AG04449 (cell line): ENCODE measurements at regions of chr1 and their contacts with region 1.

Region 1: GRCh38 chr1:67766141-67766978 is 66.9 kb downstream of the GNG12 start:
- DNase-seq: peak; percentile 64
- H3K4me3 ChIP-seq: peak overlapping the region; percentile 38
- CTCF ChIP-seq: peak; percentile 42

Region 2: DNA sequence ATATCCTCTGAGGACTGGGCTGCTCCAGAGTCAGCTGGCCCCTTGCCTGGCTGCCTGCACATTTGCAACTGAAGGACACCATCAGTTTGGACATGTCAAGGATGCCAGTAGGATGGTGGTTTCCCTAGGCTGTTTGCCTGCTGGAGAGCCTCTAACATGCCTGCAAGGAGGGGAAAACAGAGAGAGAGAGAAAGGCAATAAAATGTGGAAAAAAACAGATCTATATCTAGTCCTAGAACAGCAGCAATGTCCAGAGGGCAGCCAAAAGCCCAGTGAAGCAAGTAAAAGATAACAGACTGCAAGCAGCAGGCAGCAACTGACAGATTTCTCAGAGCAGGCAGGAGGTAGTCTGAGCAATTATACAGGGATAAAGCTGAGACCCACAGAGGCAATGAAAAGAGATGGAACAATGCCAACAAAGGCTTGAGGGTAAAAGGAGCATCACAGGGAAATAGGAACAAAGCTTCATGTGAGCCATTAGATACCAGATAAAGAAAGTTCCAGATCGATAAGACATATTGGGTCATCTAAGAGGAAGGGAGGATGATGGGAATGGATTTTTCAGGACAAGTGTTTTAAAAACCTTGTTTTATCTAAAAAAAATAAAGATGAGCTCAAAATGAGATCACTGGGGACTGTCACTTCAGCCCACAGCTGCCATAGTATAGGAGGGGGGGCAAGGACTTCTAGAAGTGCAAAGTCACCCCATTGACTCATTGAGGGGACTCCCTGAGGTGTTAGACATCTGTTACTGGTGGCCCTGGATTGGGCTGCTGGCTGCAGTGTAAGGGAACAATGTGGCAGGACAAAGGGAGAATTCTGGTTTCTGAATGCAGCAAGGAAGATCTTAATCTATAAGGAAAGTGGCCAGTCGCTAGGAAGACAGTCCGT is 120.0 kb before region 1 on chr1:
- CTCF ChIA-PET with region 1: no interaction called
- POLR2A ChIA-PET with region 1: no interaction called
- DNase-seq: peak; percentile 9
- H3K4me3 ChIP-seq: no peak overlapping the region
- CTCF ChIP-seq: no peak

Region 3: DNA sequence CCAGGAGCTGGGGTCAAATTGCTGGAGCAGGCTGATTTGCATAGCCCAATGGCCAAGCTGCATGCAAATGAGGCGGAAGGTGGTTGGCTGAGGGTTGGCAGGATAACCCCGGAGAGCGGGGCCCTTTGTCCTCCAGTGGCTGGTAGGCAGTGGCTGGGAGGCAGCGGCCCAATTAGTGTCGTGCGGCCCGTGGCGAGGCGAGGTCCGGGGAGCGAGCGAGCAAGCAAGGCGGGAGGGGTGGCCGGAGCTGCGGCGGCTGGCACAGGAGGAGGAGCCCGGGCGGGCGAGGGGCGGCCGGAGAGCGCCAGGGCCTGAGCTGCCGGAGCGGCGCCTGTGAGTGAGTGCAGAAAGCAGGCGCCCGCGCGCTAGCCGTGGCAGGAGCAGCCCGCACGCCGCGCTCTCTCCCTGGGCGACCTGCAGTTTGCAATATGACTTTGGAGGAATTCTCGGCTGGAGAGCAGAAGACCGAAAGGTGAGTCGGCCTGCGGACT is 81.2 kb before region 1 on chr1 and contains the start of gene GADD45A:
- CTCF ChIA-PET with region 1: interaction called, 66 read pairs
- POLR2A ChIA-PET with region 1: interaction called, 32 read pairs
- DNase-seq: peak; percentile 98
- H3K4me3 ChIP-seq: peak within 1 kb of the TSS; percentile 91
- CTCF ChIP-seq: no peak

Region 4: DNA sequence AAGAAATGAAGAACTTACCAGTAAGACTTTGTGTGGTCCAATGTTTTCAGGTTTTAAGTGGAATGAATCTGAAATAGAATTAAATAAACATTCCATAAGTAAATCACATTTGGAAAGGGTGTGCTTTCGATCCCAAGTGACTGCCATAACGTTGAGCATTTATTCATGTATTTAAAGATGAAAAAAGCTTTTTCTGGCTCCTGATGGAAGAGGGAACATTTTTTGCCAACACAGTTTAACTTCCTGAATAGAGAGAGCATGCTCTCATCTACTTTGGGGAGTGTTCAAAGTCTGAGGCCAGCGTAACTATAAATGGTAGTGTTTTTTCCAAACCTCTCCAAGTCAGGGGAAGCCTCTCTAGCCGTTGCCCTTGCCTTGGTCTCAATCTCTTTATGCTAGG is 11.1 kb after region 1 on chr1:
- CTCF ChIA-PET with region 1: interaction called, 68 read pairs
- POLR2A ChIA-PET with region 1: interaction called, 3 read pairs
- DNase-seq: no peak
- H3K4me3 ChIP-seq: no peak overlapping the region
- CTCF ChIP-seq: no peak

Region 5: GRCh38 chr1:67791686-67792475 is 25.5 kb after region 1 on chr1:
- CTCF ChIA-PET with region 1: interaction called, 96 read pairs
- POLR2A ChIA-PET with region 1: interaction called, 5 read pairs
- DNase-seq: peak; percentile 91
- H3K4me3 ChIP-seq: peak overlapping the region; percentile 13
- CTCF ChIP-seq: no peak

Region 6: DNA sequence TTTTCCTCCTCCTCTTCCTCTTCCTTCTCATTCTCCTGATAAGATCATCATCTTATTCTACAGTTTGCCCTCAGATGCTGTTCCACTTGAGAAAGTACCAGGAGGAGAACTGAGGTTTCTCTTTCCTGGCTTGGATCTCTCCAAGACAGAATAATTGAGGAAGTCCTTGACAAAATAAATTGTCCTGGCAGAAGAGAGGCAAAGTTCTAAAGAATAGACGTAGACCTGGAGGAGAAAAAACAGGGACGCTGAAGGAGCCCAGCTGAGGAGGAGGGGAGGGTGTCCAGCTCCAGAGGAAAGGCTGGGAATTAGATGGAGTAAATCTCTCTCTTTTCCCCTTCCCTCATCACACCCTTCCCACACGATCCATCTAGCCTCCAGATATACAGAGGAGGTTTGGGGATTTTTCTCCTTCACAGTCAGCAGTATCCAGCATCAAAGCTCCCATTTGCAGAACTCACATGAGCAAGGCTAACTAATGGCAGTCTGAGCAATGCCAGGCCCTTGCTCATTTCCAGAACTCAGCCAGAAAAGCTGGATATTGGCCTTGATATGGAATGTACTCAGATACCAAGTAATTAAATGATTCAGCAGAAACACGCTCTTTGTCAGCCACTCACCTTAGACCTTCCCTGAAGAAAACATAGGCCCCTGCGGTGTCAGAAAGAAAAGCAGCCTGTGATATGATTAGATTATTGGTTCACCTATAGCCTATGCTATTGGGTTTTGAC is 72.0 kb after region 1 on chr1:
- CTCF ChIA-PET with region 1: interaction called, 42 read pairs
- POLR2A ChIA-PET with region 1: interaction called, 6 read pairs
- DNase-seq: no peak
- H3K4me3 ChIP-seq: no peak overlapping the region
- CTCF ChIP-seq: no peak